ENCODE measurements at regions of chr2 and their contacts with region 1.

Region 1: DNA sequence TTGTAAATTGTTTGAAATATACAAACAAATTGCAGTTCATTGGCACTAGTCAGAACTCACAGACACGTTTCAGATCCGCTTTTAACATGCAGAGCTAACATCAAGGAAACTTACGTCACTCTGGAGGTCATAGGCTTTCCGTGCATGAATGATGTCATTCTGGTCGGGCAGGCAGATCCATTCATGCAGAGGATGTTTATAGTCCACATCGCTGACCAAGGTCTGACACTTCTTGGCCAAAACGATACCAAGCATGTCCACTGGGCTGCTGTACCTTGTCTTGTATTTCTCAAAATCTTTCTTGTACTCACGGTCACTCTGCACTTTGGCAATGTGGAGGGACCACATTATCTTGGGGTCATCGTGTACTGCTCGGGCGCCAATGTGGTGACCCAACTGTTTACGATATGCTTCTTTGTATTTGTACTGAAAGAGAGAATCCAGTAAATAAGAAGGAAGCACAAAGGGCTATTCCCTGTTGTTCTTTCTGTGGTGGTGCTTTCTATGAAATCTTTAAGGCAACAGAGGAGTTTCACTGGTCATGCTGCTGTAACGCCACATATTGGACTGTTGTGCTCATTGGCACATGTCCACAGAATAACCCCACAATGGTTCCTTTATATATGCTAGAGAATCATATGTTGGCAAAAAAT is 114.8 kb downstream of the NEB start:
- DNase-seq: no peak
- H3K4me3 ChIP-seq: no peak overlapping the region
- H3K4me1 ChIP-seq: peaks cover 2% of the 10 kb centered on the region; the same call in 1 of the 2 replicates
- H3K27me3 ChIP-seq: no peaks in the 10 kb centered on the region

Region 2: GRCh38 chr2:151556121-151556520 is 63.3 kb before region 1 on chr2:
- in situ Hi-C with region 1: loop called (anchors 10 kb)
- DNase-seq: no peak
- H3K4me3 ChIP-seq: no peak overlapping the region
- H3K4me1 ChIP-seq: peaks cover 6% of the 10 kb centered on the region
- H3K27me3 ChIP-seq: peaks cover 2% of the 10 kb centered on the region; the same call in 1 of the 2 replicates

Measured in HAP-1 (cell line).